GM12878 (cell line): ENCODE measurements at regions of chr12 and their contacts with region 1.

Region 1: DNA sequence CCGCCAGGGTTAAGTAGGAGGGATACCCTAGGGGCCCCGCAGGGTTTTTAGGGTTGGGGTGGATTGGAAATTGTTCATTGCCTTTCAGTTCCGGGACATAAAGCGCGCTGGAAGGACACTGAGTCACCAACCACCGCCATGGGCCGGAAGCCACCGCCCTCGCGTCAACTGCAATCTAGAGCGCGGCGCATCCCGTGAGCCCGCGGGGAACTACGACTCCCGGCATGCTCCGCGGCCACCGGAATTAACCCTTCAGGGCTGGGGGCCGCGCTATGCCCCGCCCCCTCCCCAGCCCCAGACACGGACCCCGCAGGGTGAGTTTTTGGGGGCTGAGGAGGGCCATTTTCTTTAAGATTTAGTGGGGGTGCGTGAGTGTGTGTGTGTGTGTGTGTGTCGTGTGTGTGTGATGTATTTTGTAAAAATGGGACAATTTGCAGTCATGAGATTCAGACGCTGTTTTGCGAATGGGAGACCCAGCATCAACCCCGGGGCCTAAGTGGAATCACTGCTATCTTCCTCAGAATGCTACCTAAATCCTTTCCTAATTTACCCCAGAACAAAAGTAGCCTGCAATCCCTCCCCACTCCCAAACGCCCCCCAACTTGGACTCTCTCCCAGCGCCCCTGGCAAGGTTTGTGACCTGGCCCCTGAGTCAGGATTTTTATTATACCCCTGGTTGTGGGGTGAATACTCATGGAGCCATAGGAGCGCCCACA is at the start of gene MYL6B:
- DNase-seq: peak; percentile 66
- ATAC-seq: peak; percentile 94
- H3K4me3 ChIP-seq: peak within 1 kb of the TSS; percentile 84
- H3K27ac ChIP-seq: peak within 1 kb of the TSS; percentile 95
- H3K4me1 ChIP-seq: peaks cover 17% of the 10 kb centered on the region
- H3K27me3 ChIP-seq: no peaks in the 10 kb centered on the region
- CTCF ChIP-seq: no peak
- EP300 ChIP-seq: no peak
- POLR2A ChIP-seq: peak; percentile 93
- RAD21 ChIP-seq: no peak
- polyA plus RNA-seq, gene MYL6B: 117 to 153 TPM

Region 2: DNA sequence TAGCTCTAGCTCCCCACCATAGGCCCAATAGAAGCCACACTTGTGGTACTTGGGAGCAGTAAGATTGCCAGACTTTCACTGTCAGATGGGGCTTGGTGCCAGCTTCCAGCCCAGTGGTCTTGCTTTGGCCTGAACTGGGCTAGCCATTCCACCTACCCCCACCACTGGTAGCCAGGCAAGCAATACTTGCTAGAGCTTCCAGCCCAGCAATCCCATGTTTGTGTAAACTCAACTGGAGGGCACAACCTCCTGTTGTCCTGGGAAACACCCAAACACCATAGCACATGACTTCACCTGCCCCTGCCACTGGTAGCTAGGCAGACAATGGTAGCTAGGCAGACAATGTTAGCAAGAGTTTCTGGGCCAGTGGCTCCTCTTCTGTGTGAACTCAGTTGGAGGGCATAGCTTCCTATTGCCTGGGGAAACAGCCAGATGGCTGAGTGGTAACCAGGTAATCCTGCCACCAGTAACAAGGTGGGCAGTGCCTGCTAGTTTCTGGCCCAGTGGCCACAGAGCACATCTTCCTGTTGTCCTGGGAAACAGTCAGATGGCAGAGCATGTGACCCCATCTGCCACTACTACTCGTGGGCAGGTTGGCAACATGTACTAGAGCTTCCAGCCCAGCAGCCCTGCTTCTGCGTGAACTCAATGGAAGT is 732.0 kb before region 1 on chr12:
- CTCF ChIA-PET with region 1: no interaction called
- POLR2A ChIA-PET with region 1: no interaction called
- RAD21 ChIA-PET with region 1: no interaction called
- SMC1A ChIA-PET with region 1: no interaction called
- in situ Hi-C with region 1: no loop called
- intact Hi-C with region 1: no loop called
- DNase-seq: no peak
- ATAC-seq: no peak
- H3K4me3 ChIP-seq: no peak overlapping the region
- H3K27ac ChIP-seq: no peak overlapping the region
- H3K4me1 ChIP-seq: no peaks in the 10 kb centered on the region
- H3K27me3 ChIP-seq: no peaks in the 10 kb centered on the region
- CTCF ChIP-seq: no peak
- EP300 ChIP-seq: no peak
- POLR2A ChIP-seq: no peak
- RAD21 ChIP-seq: no peak

Region 3: DNA sequence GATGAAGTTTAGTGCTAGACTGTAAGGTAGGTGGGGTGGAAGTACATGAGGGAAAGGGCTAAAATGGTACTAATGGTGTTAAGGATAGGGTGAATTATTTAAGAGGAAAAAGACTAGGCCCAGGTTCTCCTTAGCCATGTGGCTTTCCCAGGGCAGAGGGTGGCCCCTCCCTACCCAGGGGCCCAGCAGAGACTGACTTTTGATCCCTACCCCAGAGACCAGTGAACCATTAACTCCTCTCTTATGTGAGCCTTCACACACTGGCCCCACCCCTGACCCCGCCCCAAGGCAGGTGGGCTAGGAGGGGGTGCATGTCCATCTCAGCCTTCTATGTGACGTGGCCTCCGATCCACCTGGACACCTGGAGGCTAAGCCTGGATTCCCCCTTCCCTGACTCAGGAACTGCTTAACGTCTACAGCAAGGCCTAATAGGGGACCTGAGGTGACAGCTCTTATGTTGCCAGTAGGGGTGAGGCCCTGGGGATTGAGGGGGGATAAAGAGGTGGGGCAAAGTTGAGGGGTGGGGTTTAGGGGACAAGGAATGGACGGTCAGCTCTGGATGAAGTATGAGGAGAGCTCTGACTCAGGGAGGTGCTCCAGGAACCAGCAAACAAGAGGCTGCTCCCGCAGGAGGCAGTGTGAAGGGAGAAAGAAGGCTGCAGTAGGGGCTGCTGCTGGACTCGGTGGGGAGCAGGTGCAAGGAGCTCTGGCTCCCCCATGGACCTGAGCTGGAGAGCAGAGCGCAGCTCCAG is 78.1 kb after region 1 on chr12:
- CTCF ChIA-PET with region 1: no interaction called
- POLR2A ChIA-PET with region 1: interaction called, 13 read pairs
- RAD21 ChIA-PET with region 1: no interaction called
- SMC1A ChIA-PET with region 1: no interaction called
- in situ Hi-C with region 1: no loop called
- intact Hi-C with region 1: no loop called
- DNase-seq: no peak
- ATAC-seq: peak; percentile 24; the same call in 1 of the 3 replicates
- H3K4me3 ChIP-seq: no peak overlapping the region
- H3K27ac ChIP-seq: no peak overlapping the region
- H3K4me1 ChIP-seq: no peaks in the 10 kb centered on the region
- H3K27me3 ChIP-seq: no peaks in the 10 kb centered on the region
- CTCF ChIP-seq: no peak
- EP300 ChIP-seq: no peak
- POLR2A ChIP-seq: no peak
- RAD21 ChIP-seq: no peak